ENCODE measurements at regions of chr7 and their contacts with region 1.

Region 1: DNA sequence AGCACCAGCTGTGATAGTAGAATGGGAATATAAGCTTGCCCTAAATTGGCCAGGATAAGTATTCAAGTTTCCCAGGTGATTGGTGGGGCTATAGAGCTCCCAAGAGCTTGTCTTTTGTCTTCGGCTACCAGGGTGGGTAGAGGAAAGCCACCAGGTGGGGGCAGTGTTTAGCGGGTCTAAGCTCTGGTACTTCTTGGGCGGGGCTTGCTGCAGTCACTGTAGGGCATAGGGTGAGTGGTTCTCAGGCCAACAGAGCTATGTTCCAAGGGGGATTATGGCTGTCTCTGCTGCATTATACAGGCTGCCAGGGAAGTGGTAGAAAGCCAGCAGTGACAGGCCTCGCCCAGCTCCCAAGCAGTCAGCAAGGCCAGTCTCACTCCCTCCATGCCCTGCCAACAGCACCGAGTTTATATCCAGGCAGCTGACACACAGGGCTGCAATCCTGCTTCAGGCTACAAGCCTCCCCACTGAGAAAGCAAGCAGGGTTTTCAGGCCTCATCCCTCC is 110.7 kb downstream of the ZNF467 start:
- DNase-seq: peak; percentile 66
- CTCF ChIP-seq: peak; percentile 63

Region 2: GRCh38 chr7:149334930-149335329 is 327.7 kb before region 1 on chr7:
- CTCF ChIA-PET with region 1: no interaction called
- POLR2A ChIA-PET with region 1: no interaction called
- DNase-seq: no peak
- CTCF ChIP-seq: no peak

Region 3: DNA sequence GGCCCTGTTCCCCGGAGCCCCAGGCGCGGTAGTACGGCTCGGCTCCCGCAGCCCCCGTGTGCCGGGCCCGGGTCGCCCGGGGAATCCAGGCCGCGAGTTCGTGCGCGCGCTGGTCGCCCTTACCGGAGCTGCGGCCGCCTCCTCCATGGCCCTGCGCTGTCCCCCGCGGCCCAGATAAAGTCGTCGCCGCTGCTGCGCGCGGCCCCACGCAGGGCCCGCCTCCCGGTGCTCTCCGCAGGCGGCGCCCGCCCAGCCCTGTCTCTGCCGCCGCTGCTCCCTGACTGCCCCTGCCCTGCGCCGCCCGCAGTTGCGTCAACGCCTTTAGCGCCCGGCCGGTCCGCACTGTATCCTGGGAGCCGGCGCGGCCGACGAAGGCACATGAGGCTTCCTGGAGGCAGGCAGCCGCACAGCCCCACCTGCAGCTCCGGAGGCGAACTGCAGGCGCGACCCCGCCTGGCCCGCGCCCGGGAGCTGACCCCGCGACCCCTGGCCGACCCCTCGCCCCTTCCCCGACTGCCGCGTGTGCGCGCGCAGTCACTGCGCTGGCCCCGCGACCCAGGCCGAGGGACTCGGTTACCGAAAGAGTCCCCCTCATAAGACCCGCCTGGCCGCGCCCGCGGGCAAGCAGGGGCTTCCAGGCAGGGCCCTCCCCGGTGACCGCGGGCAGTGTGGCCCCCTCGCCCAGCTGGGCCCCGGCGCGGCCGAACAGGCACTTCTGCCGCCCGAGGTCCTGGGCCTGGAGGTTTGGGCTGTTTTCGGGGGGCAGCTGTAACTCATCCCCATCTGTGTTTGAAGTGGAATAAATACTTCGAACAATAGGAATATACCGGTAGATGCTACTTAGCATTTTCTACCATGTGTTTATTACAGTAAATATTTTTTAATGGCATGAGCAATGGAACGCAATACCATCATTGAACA is 38.0 kb before region 1 on chr7:
- CTCF ChIA-PET with region 1: interaction called, 12 read pairs
- POLR2A ChIA-PET with region 1: no interaction called
- DNase-seq: peak; percentile 92
- CTCF ChIP-seq: peak; percentile 93

Region 4: GRCh38 chr7:149680331-149681025 is 17.8 kb after region 1 on chr7:
- CTCF ChIA-PET with region 1: interaction called, 49 read pairs
- POLR2A ChIA-PET with region 1: no interaction called
- DNase-seq: no peak
- CTCF ChIP-seq: no peak

Region 5: DNA sequence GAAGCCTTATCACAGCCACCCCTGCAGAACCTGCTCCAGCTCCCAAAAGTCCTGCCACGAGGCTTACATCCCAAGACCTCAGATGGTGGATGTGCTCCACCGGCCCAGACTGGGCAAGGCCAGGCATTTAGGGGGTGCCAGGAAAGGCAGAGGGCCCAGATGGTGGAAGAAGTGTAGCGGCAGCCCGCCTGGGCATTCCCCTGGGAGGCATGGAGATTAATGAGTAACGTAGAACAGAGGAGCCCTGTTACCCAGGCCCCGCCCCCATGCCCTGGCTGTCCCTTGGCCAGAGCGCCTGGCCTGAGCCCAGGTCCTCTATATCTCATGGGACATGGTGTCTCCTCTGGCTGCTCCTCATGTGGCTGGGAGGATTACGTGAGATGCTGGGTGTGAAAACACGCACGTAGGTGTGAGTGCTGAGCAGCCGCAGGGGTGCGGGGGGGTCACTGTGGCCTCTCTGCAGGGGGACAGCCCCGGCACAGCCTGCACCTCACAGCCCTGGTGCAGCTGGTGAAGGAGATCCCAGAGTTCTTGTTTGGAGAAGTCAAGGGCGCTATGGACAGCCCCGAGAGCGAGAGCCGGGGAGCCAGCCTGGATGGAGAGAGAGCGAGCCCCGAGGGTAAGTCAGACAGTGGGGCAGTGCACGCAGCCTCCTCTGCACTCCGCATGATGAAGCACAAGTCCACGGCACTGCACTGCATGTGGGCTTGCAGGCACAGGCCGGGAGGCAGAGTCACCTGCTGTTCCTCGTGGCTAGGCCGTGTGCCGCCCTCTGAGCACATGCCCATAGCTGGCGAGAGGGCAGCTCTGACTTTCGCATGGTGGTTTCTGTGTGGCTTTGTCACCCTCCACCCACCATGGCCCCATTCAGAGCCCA is 58.0 kb after region 1 on chr7:
- CTCF ChIA-PET with region 1: interaction called, 18 read pairs
- POLR2A ChIA-PET with region 1: no interaction called
- DNase-seq: peak; percentile 51
- CTCF ChIP-seq: no peak

Region 6: GRCh38 chr7:149742075-149742701 is 79.5 kb after region 1 on chr7:
- CTCF ChIA-PET with region 1: interaction called, 251 read pairs
- POLR2A ChIA-PET with region 1: interaction called, 5 read pairs
- DNase-seq: peak; percentile 86
- CTCF ChIP-seq: peak; percentile 96

Region 7: DNA sequence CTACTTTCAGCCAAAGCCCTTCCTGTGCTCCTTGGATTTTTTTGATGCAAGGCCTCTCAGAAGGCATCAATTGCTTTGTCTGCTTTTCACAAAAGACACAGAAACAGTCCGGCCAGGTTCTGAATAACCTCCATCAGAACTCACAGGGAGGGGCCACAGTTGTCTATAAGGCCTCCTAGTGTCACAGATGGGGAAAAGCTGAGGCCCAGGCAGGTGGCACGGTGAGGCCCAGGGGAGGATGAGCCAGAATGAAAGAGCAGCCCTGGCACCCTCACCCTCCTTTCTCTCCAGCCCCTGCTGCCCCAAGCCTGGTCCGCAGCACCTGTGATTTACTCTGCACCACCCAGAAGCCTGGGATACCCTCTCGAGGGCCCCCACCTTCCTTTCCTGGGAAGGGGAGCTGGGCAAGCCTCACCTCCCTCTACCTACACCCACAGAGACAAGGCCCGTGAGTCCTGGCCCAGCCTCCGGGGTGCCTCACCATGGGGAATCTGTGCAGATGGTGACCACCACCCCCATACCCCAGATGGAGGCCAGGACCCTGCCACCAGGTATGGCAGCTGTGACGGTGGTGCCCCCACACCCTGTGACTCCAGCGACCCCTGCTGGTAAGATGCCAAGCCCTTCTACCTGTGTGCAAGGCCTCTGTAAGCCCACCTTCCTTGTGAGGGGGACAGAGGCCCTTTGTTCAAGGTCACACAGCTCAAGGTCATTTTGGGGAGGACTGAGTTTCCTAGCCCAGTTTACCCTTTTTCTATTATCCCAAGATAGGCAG is 136.9 kb after region 1 on chr7:
- CTCF ChIA-PET with region 1: interaction called, 28 read pairs
- POLR2A ChIA-PET with region 1: no interaction called
- DNase-seq: peak; percentile 74
- CTCF ChIP-seq: peak; percentile 63